OCI-LY7 (cell line): ENCODE measurements at regions of chr4 and their contacts with region 1.

Region 1: GRCh38 chr4:101103381-101104142 is 243.8 kb downstream of the PPP3CA start:
- DNase-seq: peak; percentile 81
- H3K4me3 ChIP-seq: peak overlapping the region; percentile 28
- H3K27ac ChIP-seq: peak overlapping the region; percentile 66
- H3K4me1 ChIP-seq: peaks cover 22% of the 10 kb centered on the region
- CTCF ChIP-seq: no peak

Region 2: DNA sequence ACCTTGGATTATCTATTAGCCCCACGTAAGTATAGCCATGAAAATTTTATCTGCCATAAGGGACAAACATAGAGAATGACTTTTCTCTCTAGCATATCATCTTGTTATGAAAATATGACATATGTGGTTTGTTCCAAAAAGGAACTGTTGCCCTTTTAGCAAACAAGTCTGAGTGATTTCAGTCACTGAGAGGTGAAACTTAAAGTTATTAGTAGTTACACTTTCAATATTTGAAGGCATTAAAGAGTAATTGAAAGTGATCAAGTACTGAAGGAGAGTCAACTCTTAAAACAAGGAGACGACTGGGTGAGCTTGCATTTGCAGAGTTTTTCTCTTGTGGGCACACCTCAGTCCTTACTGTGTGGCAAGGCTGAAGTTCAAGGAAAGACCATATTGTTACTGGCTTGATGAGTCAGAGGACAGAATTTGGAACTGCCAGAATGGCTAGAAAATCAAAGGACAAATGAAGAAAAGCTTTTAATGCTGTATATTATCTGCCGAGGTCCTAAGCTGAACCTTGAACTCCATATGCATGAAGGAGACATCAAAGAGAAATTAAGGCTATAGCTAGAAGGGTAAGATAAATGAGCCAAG is 380.6 kb before region 1 on chr4:
- CTCF ChIA-PET with region 1: no interaction called
- POLR2A ChIA-PET with region 1: no interaction called
- intact Hi-C with region 1: no loop called
- DNase-seq: no peak
- H3K4me3 ChIP-seq: no peak overlapping the region
- H3K27ac ChIP-seq: no peak overlapping the region
- H3K4me1 ChIP-seq: no peaks in the 10 kb centered on the region
- CTCF ChIP-seq: no peak

Region 3: DNA sequence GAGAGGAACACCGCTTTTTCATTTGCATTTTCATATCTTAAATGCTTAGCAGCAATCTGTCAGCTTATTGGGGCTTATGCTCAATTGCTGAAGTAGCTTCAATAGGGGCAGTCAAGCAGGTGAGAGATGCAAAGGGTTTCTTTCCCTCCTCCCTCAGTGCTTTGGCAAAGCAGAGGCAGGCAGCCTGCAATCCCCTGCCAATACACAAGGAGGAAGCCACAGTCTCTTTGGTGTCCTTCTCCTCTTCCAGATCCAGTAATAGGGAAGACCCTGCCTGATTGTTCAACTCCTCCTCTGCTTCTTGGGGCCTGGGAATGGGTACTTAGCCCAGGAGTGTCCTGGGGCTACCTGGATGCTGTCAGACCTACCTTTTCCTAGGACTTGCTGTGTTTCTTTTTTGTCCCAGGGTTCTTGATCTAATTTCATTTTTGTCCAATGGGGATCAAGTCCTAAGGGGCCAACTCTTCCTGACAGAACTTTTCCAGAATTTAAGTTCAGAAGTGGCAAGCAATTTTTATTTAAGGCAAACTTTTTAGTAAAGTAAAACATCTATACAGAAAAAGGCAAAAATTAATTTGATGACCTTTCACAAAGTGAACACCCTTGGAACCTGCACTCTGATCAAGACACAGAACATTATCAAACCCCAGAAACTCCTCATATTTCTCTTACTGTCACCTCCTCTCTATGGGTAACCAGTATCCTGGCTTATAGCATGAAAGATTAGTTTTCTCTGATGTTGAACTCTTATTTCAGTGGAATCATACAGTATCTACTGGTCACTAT is 16.6 kb before region 1 on chr4:
- CTCF ChIA-PET with region 1: no interaction called
- POLR2A ChIA-PET with region 1: interaction called, 4 read pairs
- intact Hi-C with region 1: loop called (anchors 2 kb)
- DNase-seq: peak; percentile 39
- H3K4me3 ChIP-seq: no peak overlapping the region
- H3K27ac ChIP-seq: no peak overlapping the region
- H3K4me1 ChIP-seq: peaks cover 45% of the 10 kb centered on the region
- CTCF ChIP-seq: peak; percentile 38

Region 4: GRCh38 chr4:101123231-101123630 is 19.7 kb after region 1 on chr4:
- CTCF ChIA-PET with region 1: interaction called, 3 read pairs
- POLR2A ChIA-PET with region 1: interaction called, 14 read pairs
- intact Hi-C with region 1: no loop called
- DNase-seq: no peak
- H3K4me3 ChIP-seq: no peak overlapping the region
- H3K27ac ChIP-seq: no peak overlapping the region
- H3K4me1 ChIP-seq: peaks cover 37% of the 10 kb centered on the region
- CTCF ChIP-seq: no peak